HEK293 (cell line): ENCODE measurements at regions of chr20 and their contacts with region 1.

Region 1: GRCh38 chr20:45044084-45044573 is 56.8 kb downstream of the KCNS1 start:
- H3K4me3 ChIP-seq: no peak overlapping the region
- H3K27ac ChIP-seq: no peak overlapping the region
- H3K4me1 ChIP-seq: peaks cover 6% of the 10 kb centered on the region; the same call in 1 of the 2 replicates
- CTCF ChIP-seq: peak; percentile 61

Region 2: GRCh38 chr20:44805979-44806620 is 238.0 kb before region 1 on chr20:
- CTCF ChIA-PET with region 1: no interaction called
- POLR2A ChIA-PET with region 1: no interaction called
- H3K4me3 ChIP-seq: no peak overlapping the region
- H3K27ac ChIP-seq: no peak overlapping the region
- H3K4me1 ChIP-seq: no peaks in the 10 kb centered on the region
- CTCF ChIP-seq: no peak

Region 3: DNA sequence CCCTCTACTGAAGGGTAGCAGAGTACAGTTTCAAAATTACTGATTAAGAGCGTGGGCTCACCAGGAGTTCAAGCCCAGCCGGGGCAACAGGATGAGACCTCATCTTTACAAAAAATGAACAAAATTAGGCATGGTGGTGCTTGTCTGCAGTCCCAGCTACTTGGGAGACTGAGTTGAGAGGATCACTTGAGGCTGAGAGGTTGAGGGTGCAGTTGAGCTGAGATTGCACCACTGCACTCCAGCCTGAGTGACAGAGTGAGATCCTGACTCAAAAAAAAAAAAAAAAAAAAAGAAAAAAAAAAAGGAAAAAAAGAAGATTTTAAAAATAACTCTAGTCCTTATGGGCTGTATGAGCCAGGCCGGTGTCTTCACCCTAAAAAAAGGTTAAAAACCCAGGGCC is 115.5 kb before region 1 on chr20:
- CTCF ChIA-PET with region 1: no interaction called
- POLR2A ChIA-PET with region 1: no interaction called
- H3K4me3 ChIP-seq: no peak overlapping the region
- H3K27ac ChIP-seq: no peak overlapping the region
- H3K4me1 ChIP-seq: no peaks in the 10 kb centered on the region
- CTCF ChIP-seq: no peak

Region 4: GRCh38 chr20:45011108-45011526 is 33.0 kb before region 1 on chr20:
- CTCF ChIA-PET with region 1: interaction called, 22 read pairs
- POLR2A ChIA-PET with region 1: no interaction called
- H3K4me3 ChIP-seq: no peak overlapping the region
- H3K27ac ChIP-seq: no peak overlapping the region
- H3K4me1 ChIP-seq: peaks cover 16% of the 10 kb centered on the region
- CTCF ChIP-seq: peak; percentile 56; the same call in 1 of the 2 replicates

Region 5: DNA sequence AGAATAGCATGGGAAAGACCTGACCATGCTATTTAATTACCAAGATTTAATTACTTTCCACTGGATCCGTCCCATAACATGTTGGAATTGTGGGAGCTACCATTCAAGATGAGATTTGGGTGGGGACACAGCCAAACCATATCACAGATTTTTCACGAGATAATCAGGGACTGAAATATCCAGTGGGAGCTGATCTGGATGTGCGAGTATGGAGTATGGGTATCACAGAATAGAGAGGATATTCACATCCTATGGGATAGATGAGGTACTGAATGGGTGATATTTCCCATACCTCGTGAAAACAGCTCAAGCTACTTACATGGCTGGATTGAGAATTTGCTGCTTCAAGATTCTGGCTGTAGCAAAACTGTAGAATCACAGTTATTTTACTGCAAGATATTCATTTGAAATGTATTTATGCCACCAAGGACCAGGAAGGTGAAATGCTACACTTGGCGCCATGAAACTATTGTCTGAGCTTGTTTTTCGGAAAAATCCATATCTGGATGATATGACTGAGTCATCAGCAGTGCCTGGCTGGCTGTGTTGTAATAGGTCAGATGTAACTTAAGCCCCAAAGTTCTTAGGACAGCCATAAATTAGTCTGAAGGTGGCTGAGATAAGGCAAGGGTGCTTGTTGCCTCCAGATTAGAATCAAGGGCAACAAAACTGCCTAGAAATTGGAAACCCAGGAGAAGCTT is 27.0 kb after region 1 on chr20:
- CTCF ChIA-PET with region 1: interaction called, 13 read pairs
- POLR2A ChIA-PET with region 1: no interaction called
- H3K4me3 ChIP-seq: no peak overlapping the region
- H3K27ac ChIP-seq: no peak overlapping the region; the same call in 1 of the 2 replicates
- H3K4me1 ChIP-seq: no peaks in the 10 kb centered on the region
- CTCF ChIP-seq: no peak

Region 6: DNA sequence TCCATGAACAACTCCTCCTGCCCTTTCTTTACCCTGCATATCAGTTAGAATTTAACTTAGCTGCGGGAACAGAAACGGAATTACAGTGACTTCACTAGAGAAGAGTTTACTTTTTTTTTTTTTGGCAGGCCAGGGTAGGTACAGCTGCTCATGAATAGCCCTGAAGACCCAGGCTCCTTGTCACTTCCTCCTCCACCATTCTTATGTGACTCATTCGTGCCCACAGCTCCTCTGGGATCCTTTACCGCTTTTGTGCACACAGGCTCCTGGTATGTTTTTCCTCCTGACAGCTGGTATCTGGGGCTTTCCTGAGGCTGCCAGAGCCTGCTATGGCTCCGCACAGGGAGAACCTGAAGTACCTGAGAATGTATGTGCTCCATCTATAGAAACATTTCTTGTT is 60.7 kb after region 1 on chr20:
- CTCF ChIA-PET with region 1: interaction called, 12 read pairs
- POLR2A ChIA-PET with region 1: no interaction called
- H3K4me3 ChIP-seq: no peak overlapping the region
- H3K27ac ChIP-seq: no peak overlapping the region
- H3K4me1 ChIP-seq: no peaks in the 10 kb centered on the region
- CTCF ChIP-seq: no peak

Region 7: GRCh38 chr20:45111799-45112471 is 67.8 kb after region 1 on chr20:
- CTCF ChIA-PET with region 1: interaction called, 34 read pairs
- POLR2A ChIA-PET with region 1: no interaction called
- H3K4me3 ChIP-seq: no peak overlapping the region
- H3K27ac ChIP-seq: no peak overlapping the region
- H3K4me1 ChIP-seq: no peaks in the 10 kb centered on the region
- CTCF ChIP-seq: no peak

Region 8: DNA sequence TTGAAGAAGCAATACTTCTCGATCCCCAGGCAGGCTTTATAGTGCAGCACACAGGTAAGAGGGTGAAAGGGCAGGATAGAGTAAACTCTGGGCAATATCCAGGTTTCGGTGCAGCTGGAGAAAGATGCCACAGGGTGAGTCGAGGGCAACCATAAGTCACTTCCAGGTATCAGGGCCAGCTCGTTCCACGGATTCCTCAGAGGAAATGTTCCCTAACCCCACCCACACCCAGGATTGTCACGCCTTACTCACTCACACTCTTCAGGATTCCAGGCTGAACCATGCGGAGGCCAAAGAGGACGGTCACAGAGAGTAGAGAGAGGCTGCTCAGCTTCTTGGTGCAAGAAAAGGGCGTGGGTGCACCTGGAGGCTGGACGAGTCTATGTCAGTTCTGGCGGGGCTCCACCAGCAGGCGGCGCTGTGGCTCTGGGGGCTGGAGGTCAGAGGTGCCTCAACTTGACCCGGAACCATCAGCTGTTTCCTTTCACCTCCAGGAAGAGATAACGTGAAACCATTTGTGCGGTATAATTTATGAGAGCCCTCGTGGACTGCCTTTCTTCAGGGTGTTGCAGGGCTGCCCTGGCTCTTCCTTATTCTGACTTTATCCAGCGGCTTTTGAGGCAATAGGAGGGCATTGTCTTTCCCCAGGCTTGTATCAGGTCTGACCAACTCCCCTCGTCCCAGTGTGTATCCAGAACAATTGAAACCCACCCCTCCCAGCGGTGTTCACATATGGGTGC is 94.6 kb after region 1 on chr20:
- CTCF ChIA-PET with region 1: interaction called, 23 read pairs
- POLR2A ChIA-PET with region 1: no interaction called
- H3K4me3 ChIP-seq: no peak overlapping the region
- H3K27ac ChIP-seq: no peak overlapping the region
- H3K4me1 ChIP-seq: no peaks in the 10 kb centered on the region
- CTCF ChIP-seq: peak; percentile 39; the same call in 1 of the 2 replicates